ENCODE measurements at regions of chr11 and their contacts with region 1.

Region 1: GRCh38 chr11:93662177-93662575 is 694 bp downstream of the CEP295 start:
- DNase-seq: no peak
- H3K4me3 Mint-ChIP-seq: peak overlapping the region; percentile 90
- H3K27ac Mint-ChIP-seq: peak overlapping the region; percentile 85
- H3K4me1 Mint-ChIP-seq: peaks cover 38% of the 10 kb centered on the region
- H3K27me3 Mint-ChIP-seq: no peaks in the 10 kb centered on the region

Region 2: GRCh38 chr11:93197380-93198214 is 464.6 kb before region 1 on chr11 and contains the start of gene SLC36A4:
- intact Hi-C with region 1: loop called (anchors 2 kb)
- DNase-seq: peak; percentile 96
- H3K4me3 Mint-ChIP-seq: peak within 1 kb of the TSS; percentile 86
- H3K27ac Mint-ChIP-seq: peak within 1 kb of the TSS; percentile 87
- H3K4me1 Mint-ChIP-seq: peaks cover 13% of the 10 kb centered on the region
- H3K27me3 Mint-ChIP-seq: peaks cover 19% of the 10 kb centered on the region
- total RNA-seq, gene SLC36A4: 14.7 and 16.1 TPM in 2 replicates

Region 3: GRCh38 chr11:93741094-93741881 is 79.1 kb after region 1 on chr11 and contains the starts of genes C11orf54 and TAF1D:
- intact Hi-C with region 1: loop called (anchors 2 kb)
- DNase-seq: peak; percentile 99
- H3K4me3 Mint-ChIP-seq: peak within 1 kb of the TSS; percentile 100
- H3K27ac Mint-ChIP-seq: peak within 1 kb of the TSS; percentile 99
- H3K4me1 Mint-ChIP-seq: peaks cover 41% of the 10 kb centered on the region
- H3K27me3 Mint-ChIP-seq: no peaks in the 10 kb centered on the region
- total RNA-seq, gene C11orf54: 21.6 and 22.2 TPM in 2 replicates
- total RNA-seq, gene TAF1D: 328 and 342 TPM in 2 replicates

Region 4: DNA sequence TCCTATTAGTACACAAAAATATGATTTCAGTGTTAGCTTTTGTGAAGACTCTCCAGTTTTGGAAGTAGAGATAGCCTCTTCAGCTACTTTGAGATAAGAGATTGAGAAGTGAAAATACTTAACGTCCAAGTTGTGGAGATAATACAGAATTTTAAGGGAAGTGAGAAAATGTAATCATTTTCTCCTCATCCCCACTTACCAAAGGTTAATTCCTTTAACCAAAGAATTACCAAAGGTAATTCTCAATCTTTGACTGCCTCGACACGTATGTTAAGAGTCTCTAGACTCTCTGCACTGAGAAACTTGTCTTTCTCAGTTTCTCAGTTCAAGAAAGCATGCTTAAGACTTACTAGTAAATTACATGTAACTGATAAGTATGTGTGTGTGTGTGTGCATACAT is 94.6 kb after region 1 on chr11:
- intact Hi-C with region 1: no loop called
- DNase-seq: no peak
- H3K4me3 Mint-ChIP-seq: no peak overlapping the region
- H3K27ac Mint-ChIP-seq: no peak overlapping the region
- H3K4me1 Mint-ChIP-seq: no peaks in the 10 kb centered on the region
- H3K27me3 Mint-ChIP-seq: no peaks in the 10 kb centered on the region

Region 5: GRCh38 chr11:94134651-94135512 is 472.7 kb after region 1 on chr11:
- intact Hi-C with region 1: loop called (anchors 10 kb)
- DNase-seq: peak; percentile 67
- H3K4me3 Mint-ChIP-seq: peak overlapping the region; percentile 42
- H3K27ac Mint-ChIP-seq: peak overlapping the region; percentile 81
- H3K4me1 Mint-ChIP-seq: peaks cover 42% of the 10 kb centered on the region
- H3K27me3 Mint-ChIP-seq: no peaks in the 10 kb centered on the region

Region 6: GRCh38 chr11:94543695-94544645 is 881.8 kb after region 1 on chr11 and contains the start of gene FUT4:
- intact Hi-C with region 1: loop called (anchors 5 kb)
- DNase-seq: peak; percentile 93
- H3K4me3 Mint-ChIP-seq: peak within 1 kb of the TSS; percentile 99
- H3K27ac Mint-ChIP-seq: peak within 1 kb of the TSS; percentile 100
- H3K4me1 Mint-ChIP-seq: peaks cover 33% of the 10 kb centered on the region
- H3K27me3 Mint-ChIP-seq: peaks cover 6% of the 10 kb centered on the region
- total RNA-seq, gene FUT4: 8.3 and 8.8 TPM in 2 replicates